ENCODE measurements at regions of chr1 and their contacts with region 1.

Region 1: DNA sequence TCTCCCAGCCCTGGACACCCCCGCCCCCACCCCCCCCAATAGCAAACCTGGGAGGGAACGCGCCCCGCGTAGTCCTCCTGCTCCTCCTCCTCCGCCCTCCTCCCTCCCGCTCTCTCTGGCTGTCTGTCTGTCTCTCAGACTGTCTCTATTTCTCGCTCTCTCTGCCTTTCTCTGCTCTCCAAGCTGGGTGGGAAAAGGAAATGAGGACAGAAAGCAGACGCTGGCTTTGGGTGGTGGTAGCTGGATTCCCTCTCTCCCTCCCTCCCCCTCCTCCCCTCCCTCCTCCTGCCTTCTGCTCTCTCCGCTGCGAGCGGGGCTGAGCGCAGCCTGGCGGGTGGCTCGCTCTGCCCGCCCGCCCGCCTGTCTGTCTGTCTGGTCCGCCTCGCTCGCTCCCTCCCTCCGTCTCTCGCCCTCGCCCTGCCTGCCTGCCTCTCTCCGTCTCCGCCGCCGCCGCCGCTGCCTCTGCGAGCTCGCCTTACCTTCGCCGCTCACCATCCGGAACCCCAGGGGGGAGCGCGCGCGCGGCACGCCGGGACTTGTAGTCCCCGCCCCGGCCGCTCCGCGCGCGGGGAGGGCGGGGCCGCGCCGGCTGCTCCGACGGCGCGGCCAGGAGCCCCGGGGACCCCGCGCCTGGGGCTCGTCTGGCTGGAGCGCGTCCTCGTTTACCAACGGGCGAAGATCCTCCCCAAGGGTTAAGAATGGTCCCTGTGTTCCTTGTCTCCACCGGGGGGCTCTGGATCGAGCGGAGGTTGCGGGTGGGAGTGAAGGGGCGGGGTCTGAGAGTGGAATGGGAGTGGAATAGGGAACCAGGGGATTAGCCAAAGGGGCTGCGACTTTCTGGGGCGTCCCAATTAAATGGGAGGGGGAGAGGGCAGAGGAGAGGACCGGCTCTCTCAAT is at the start of gene AHDC1:
- DNase-seq: peak; percentile 96
- ATAC-seq: peak; percentile 11
- H3K4me3 Mint-ChIP-seq: peak within 1 kb of the TSS; percentile 92
- H3K27ac Mint-ChIP-seq: peak within 1 kb of the TSS; percentile 88
- H3K4me1 Mint-ChIP-seq: peaks cover 61% of the 10 kb centered on the region
- H3K27me3 Mint-ChIP-seq: no peaks in the 10 kb centered on the region; the same call in 1 of the 2 replicates
- CTCF ChIP-seq: no peak
- total RNA-seq, gene AHDC1: 31.6 to 49.0 TPM (median 32.6 TPM) in 3 replicates

Region 2: DNA sequence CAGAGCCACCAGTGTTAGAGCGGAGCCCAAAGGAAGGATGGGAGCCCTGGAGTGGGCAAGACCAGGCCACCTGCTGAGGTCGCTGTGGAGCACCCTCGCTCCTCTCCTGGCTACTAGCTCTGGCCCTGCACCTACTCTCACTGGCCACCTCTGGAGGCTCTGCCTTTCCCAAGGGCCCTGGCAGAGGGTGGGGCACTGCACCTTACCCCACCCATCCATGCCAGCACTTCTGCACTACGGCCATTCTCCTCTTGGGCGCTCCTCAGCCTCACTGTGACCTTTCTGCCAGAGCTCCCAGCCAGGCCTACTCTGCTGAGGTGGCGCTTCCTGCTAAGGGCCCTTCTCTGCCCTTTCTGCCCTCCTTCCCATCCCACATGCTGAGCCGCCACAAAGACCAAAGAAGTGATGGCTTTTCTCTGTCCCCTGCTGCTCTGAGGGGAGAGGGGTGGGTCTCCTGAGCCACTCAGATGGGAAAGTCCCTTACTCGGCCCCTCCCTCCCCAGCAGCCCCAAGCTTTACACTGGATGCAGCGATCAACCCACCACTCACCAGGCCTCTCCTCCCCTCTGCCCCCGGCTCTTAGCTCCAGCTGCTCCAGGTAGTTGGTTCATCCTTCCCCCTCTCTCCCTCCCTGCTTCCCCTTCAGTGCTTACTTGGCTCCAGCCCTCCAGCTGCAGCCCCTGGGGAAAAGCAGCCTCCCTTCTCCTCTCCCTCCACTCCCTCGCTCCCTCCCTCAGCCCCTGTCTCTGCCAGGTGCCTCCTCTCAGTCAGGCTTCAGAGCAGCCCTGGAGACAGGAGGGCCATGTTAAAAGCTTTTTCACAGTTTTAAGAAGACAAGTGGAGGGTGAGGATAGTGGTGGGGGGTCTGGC is 296.8 kb before region 1 on chr1:
- CTCF ChIA-PET with region 1: interaction called, 21 read pairs
- POLR2A ChIA-PET with region 1: interaction called, 3 read pairs
- DNase-seq: peak; percentile 67
- ATAC-seq: peak; percentile 85
- H3K4me3 Mint-ChIP-seq: peak overlapping the region; percentile 50
- H3K27ac Mint-ChIP-seq: peak overlapping the region; percentile 79
- H3K4me1 Mint-ChIP-seq: peaks cover 25% of the 10 kb centered on the region
- H3K27me3 Mint-ChIP-seq: peaks cover 4% of the 10 kb centered on the region
- CTCF ChIP-seq: no peak

Region 3: GRCh38 chr1:27402349-27402754 is 201.6 kb before region 1 on chr1:
- CTCF ChIA-PET with region 1: interaction called, 74 read pairs
- POLR2A ChIA-PET with region 1: interaction called, 3 read pairs
- DNase-seq: peak; percentile 69
- ATAC-seq: peak; percentile 18
- H3K4me3 Mint-ChIP-seq: no peak overlapping the region
- H3K27ac Mint-ChIP-seq: peak overlapping the region; percentile 91
- H3K4me1 Mint-ChIP-seq: peaks cover 78% of the 10 kb centered on the region
- H3K27me3 Mint-ChIP-seq: no peaks in the 10 kb centered on the region
- CTCF ChIP-seq: no peak

Region 4: DNA sequence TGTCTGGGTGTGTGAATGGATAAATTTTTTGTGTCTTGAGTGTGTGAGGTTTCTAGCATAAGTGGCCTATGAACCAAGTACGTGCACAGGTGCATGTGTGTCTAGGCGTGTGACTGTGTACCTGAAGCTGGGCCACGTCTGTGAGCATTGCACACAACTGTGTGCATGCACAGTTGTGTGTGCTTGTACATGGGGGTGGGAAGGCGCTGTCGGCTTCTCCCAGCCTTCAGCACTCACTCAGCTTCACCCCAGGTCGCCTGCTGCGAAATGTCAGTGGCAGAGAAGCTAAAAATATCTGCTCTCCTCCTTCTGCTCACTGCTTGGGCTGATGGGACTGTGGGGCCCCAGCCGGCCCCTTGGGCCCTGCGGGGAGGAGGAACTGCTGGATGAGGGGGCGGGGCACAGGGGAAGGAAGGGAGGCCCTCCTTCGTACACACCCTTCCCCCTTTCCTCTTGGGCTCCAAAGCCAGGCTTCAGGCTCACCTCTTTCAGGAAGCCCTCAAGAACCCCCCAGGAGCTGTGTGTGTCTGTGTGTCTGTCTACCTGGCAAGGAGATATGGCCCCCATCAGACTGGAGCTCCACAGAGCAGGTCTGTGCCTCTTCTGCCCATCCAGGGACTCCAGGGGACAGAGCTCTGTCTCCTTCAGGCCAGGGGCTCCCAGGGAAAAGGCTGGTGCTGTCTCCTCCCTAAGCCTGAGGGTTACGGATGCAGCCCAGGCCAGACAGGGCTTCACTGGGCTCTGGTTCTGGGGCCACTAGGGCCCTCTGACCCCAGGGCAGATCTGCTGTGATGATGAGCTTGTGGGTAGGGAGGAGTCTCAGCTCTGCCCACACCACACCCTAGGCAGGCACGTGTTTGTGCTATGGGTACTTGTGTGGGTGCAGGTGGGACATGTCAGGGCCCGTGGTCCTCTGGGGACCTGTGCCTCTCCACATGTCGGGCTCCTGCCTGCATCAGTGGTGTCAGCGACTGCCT is 78.3 kb before region 1 on chr1:
- CTCF ChIA-PET with region 1: interaction called, 41 read pairs
- POLR2A ChIA-PET with region 1: interaction called, 4 read pairs
- DNase-seq: peak; percentile 79
- ATAC-seq: peak; percentile 50
- H3K4me3 Mint-ChIP-seq: peak overlapping the region; percentile 55
- H3K27ac Mint-ChIP-seq: peak overlapping the region; percentile 85
- H3K4me1 Mint-ChIP-seq: peaks cover 70% of the 10 kb centered on the region
- H3K27me3 Mint-ChIP-seq: no peaks in the 10 kb centered on the region; the same call in 1 of the 2 replicates
- CTCF ChIP-seq: no peak

Region 5: GRCh38 chr1:27581823-27582243 is 22.1 kb before region 1 on chr1:
- CTCF ChIA-PET with region 1: interaction called, 366 read pairs
- POLR2A ChIA-PET with region 1: no interaction called
- DNase-seq: no peak
- ATAC-seq: no peak
- H3K4me3 Mint-ChIP-seq: no peak overlapping the region
- H3K27ac Mint-ChIP-seq: peak overlapping the region; percentile 21
- H3K4me1 Mint-ChIP-seq: peaks cover 10% of the 10 kb centered on the region
- H3K27me3 Mint-ChIP-seq: no peaks in the 10 kb centered on the region
- CTCF ChIP-seq: no peak

Region 6: DNA sequence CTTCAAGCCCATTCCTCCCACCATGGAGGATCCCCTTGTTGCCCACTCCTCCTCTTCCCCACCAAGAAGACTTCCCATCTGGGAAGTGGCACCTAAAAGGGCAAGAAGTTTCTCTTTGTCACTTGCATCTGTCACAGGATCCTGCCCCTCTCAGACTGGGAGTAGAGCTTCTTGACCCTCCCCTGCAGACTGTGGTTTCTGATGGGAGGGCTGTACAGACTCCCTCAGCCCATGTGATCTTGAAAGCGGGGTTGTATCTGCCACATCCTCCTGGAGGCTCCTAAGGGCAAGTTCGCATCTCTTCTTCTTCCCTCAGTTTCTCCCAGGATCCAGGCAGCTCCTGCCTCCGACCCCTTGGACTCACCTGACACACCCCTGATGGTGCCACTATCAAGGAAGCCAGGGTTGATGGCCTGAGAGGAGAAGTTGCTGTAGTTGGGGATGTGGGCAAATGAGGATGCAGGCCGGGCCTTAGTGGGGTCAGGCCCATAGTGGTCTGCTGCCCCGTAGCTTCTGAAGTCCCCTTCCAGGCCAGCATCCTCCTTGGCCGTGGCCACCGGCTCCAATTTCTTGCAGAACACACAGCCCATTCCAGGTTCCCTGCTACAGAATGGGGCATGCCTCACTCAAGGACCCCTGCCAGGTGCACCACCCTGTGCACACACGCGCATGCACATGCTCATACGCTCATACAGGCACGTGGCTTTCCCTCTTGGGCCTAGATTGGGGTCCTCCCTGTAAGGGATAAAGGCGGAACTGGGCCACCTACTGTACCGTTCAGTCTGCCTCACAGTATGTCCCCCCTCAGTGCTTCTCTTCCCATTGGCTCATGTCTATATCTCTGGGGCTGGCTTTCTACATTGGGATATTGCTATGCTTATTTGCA is 19.6 kb after region 1 on chr1:
- CTCF ChIA-PET with region 1: no interaction called
- POLR2A ChIA-PET with region 1: no interaction called
- DNase-seq: no peak
- ATAC-seq: no peak
- H3K4me3 Mint-ChIP-seq: no peak overlapping the region
- H3K27ac Mint-ChIP-seq: no peak overlapping the region
- H3K4me1 Mint-ChIP-seq: peaks cover 17% of the 10 kb centered on the region
- H3K27me3 Mint-ChIP-seq: no peaks in the 10 kb centered on the region
- CTCF ChIP-seq: no peak

Region 7: GRCh38 chr1:27634985-27635367 is 31.0 kb after region 1 on chr1 and contains the start of gene FGR:
- CTCF ChIA-PET with region 1: no interaction called
- POLR2A ChIA-PET with region 1: no interaction called
- DNase-seq: no peak
- ATAC-seq: peak; percentile 22
- H3K4me3 Mint-ChIP-seq: peak within 1 kb of the TSS; percentile 72
- H3K27ac Mint-ChIP-seq: no peak within 1 kb of the TSS
- H3K4me1 Mint-ChIP-seq: peaks cover 19% of the 10 kb centered on the region
- H3K27me3 Mint-ChIP-seq: peaks cover 46% of the 10 kb centered on the region
- CTCF ChIP-seq: no peak
- total RNA-seq, gene FGR: 0.30 to 0.77 TPM (median 0.46 TPM) in 3 replicates

Region 8: GRCh38 chr1:27656157-27656893 is 52.4 kb after region 1 on chr1:
- CTCF ChIA-PET with region 1: interaction called, 367 read pairs
- POLR2A ChIA-PET with region 1: no interaction called
- DNase-seq: peak; percentile 70
- ATAC-seq: peak; percentile 57
- H3K4me3 Mint-ChIP-seq: no peak overlapping the region
- H3K27ac Mint-ChIP-seq: peak overlapping the region; percentile 79
- H3K4me1 Mint-ChIP-seq: peaks cover 37% of the 10 kb centered on the region
- H3K27me3 Mint-ChIP-seq: peaks cover 3% of the 10 kb centered on the region; the same call in 1 of the 2 replicates
- CTCF ChIP-seq: no peak

Measured in WTC11 (cell line).